ENCODE measurements at regions of chr16 and their contacts with region 1.

Region 1: DNA sequence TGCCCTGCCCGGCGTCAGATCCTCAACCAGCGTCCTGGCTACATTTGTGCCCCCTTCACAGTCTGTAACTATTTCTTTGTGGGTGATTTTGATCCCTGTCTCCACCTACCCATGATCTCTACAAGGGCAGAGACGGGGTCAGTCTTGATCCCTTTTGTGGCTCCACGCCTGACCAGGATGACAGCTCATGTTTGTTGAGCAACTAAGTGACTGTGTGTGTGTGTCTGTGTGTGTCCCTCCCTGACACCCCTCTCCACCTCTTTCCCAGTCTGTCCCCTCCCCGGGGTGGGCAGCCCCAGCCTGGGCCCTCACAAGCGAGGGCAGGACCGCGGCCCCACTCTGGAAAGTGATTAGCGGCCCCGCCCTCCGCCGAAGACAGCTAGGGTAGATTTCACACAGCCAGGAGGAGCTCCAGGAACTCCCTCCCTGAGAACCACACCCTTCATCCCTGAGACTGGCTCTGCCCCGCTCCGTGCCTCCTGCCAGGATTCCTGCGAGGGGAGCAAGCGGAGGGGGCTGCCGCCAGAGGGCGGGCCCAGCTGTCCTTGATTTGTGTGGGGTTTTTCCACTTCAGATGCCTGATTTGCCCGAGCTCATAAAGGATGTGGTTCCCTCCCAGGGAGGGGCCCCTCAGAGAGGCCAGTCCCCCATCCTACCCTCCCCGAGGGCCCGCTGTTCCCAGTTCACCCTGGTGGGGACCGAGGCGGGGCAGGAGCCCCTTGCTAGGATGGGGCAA is 5.3 kb upstream of the HS3ST6 start:
- H3K4me3 ChIP-seq: no peak overlapping the region
- H3K27ac ChIP-seq: no peak overlapping the region; the same call in 1 of the 2 replicates
- H3K4me1 ChIP-seq: no peaks in the 10 kb centered on the region; the same call in 1 of the 2 replicates
- CTCF ChIP-seq: peak; percentile 90

Region 2: GRCh38 chr16:1863681-1864460 is 59.6 kb before region 1 on chr16:
- CTCF ChIA-PET with region 1: interaction called, 57 read pairs
- POLR2A ChIA-PET with region 1: no interaction called
- H3K4me3 ChIP-seq: no peak overlapping the region
- H3K27ac ChIP-seq: no peak overlapping the region
- H3K4me1 ChIP-seq: no peaks in the 10 kb centered on the region; the same call in 1 of the 2 replicates
- CTCF ChIP-seq: no peak

Region 3: DNA sequence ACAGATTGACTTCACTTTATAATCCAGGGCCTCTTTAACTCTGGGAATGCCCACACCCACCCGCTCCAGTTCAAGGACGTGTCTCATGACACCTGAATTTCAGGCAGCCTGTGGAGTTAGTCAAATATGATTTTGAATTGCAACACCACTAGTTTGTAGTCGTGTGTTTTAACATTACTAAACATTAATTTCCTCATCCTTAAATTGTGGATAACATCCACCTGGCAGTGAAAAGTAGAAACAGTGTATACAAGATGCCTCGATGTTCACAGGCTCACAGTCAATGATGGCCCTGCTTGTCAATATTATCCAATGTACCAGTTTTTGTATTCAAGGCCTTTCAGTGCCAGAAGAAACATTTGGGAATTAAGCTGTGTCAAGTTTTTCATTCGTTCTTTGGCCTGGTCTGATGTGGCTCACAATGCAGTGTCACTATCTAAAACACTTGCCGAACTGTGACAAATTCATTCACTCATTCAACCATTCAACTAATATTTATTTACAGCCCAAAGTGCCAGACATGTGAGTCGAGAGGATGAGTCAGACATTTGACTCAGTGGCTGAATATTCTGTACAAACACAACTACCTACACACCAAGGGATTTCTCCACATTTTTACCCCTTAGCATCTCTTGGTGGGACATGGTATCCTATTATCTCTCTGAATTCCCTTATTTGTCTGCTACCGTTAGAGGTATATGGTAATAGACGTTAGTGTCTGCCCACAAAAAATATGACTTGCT is 52.9 kb before region 1 on chr16:
- CTCF ChIA-PET with region 1: interaction called, 57 read pairs
- POLR2A ChIA-PET with region 1: no interaction called
- H3K4me3 ChIP-seq: no peak overlapping the region
- H3K27ac ChIP-seq: no peak overlapping the region
- H3K4me1 ChIP-seq: no peaks in the 10 kb centered on the region
- CTCF ChIP-seq: no peak

Region 4: DNA sequence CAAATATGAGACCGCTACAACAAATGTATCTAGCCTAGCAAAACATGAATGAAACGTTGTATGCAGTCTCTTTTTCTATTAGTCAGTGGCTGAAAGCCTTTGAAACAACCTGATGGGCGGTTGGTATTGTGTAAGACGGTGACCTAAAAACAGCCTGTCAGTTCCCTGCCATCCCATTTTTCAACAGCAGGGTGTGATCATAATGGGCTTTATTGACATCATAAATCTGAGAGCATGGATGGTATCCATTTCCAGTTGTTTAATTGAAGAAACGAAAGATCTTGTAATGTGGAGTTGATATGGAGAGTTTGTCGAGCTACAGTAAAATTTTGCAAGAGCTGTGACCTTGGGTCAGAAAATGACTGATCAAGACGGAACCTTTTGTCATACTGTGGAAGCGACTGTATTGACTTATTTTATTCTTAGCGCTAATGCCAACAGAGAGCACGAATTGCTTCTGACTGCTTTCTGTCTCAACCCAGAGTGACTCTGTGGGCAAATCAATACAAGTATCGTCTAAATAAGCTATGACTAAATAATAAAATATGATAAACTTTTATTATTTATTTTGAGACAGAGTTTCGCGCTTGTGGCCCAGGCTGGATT is 39.2 kb before region 1 on chr16:
- CTCF ChIA-PET with region 1: interaction called, 14 read pairs
- POLR2A ChIA-PET with region 1: no interaction called
- H3K4me3 ChIP-seq: no peak overlapping the region
- H3K27ac ChIP-seq: no peak overlapping the region
- H3K4me1 ChIP-seq: no peaks in the 10 kb centered on the region
- CTCF ChIP-seq: no peak

Region 5: GRCh38 chr16:1942810-1943726 is 19.6 kb after region 1 on chr16 and contains the start of gene MSRB1:
- CTCF ChIA-PET with region 1: interaction called, 19 read pairs
- POLR2A ChIA-PET with region 1: interaction called, 11 read pairs
- H3K4me3 ChIP-seq: peak within 1 kb of the TSS; percentile 67
- H3K27ac ChIP-seq: no peak within 1 kb of the TSS; the same call in 1 of the 2 replicates
- H3K4me1 ChIP-seq: no peaks in the 10 kb centered on the region
- CTCF ChIP-seq: peak; percentile 48; the same call in 1 of the 2 replicates

Region 6: DNA sequence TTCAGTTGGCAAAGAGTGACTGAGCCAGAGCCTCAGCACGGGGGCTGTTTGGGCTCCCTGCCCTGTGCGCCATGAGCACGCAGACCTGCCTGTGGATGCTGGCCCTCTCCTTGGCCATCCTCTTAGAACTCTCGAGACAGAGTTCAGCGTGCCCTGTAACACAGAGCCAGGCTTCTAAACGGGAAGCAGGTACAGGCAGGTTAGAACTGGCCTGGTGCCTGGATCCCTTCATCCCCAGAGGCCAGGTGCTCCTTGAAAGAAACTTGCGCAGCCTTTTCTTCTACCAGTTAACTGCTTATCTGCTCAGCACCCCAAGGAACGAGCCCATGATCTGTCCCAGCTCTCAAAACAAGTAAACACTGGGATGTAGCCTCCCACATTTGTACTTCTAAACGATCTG is 512.6 kb after region 1 on chr16:
- CTCF ChIA-PET with region 1: no interaction called
- POLR2A ChIA-PET with region 1: no interaction called
- H3K4me3 ChIP-seq: no peak overlapping the region
- H3K27ac ChIP-seq: no peak overlapping the region
- H3K4me1 ChIP-seq: no peaks in the 10 kb centered on the region
- CTCF ChIP-seq: no peak